Dorsolateral prefrontal cortex (tissue), 120 donors: ENCODE measurements at regions of chr1 and their contacts with region 1.

Region 1: DNA sequence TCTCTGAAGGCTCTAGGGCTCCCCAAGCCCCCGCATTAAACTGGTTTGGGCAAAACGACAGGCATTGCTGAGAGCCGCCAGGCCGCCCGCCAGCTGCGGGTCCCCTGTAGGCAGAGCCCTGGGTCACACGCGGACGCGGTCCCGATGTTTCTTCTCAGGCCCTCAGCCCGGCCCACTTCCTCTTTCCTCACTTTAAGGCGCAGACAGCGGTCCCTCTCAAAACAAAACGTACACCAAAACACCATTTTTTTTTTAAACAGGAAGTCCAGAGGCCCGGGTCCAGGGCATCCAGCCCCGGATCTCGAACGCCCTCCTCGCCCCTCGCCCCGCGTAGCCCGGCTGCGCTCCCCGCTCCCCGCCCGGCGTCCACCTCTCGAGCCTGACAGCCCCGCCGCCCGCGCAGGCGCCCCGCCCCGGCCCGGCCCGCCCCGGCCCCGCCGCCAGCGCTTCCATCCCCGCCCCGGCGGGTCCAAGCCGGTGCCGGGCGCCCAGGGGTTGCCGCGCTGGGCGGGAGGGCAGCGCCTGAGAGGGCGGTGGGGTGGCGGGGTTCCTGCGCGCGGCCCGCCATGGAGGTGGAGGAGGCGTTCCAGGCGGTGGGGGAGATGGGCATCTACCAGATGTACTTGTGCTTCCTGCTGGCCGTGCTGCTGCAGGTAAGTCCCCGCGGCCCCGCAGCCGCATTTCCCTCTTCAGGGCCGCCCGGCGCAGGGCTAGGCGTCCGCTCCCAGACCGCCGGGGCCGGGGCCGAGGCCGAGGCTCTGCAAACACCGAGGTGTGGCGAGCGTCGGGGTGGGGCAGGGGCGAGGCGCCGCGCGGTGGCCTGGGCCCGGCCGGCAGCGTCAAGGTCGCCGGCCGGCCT is at the start of gene SLC22A15:
- DNase-seq: peak; percentile 49 to 78 (median 56)
- H3K4me3 ChIP-seq: peak within 1 kb of the TSS; percentile 37 to 91 (median 79)
- H3K27ac ChIP-seq: peak within 1 kb of the TSS; percentile 87 to 99 (median 97)
- H3K27me3 ChIP-seq: no peaks in the 10 kb centered on the region
- CTCF ChIP-seq: peak in 7 of 56 donors; percentile 7 to 20 (median 10)
- total RNA-seq, gene SLC22A15: 18.9 to 85.6 (median 29.7) TPM

Region 2: GRCh38 chr1:115648717-115649691 is 327.3 kb before region 1 on chr1:
- intact Hi-C with region 1: no loop called
- DNase-seq: no peak
- H3K4me3 ChIP-seq: no peak overlapping the region
- H3K27ac ChIP-seq: no peak overlapping the region
- H3K27me3 ChIP-seq: peaks cover 0 to 16% (median 0%) of the 10 kb centered on the region in 45 donors
- CTCF ChIP-seq: no peak

Region 3: DNA sequence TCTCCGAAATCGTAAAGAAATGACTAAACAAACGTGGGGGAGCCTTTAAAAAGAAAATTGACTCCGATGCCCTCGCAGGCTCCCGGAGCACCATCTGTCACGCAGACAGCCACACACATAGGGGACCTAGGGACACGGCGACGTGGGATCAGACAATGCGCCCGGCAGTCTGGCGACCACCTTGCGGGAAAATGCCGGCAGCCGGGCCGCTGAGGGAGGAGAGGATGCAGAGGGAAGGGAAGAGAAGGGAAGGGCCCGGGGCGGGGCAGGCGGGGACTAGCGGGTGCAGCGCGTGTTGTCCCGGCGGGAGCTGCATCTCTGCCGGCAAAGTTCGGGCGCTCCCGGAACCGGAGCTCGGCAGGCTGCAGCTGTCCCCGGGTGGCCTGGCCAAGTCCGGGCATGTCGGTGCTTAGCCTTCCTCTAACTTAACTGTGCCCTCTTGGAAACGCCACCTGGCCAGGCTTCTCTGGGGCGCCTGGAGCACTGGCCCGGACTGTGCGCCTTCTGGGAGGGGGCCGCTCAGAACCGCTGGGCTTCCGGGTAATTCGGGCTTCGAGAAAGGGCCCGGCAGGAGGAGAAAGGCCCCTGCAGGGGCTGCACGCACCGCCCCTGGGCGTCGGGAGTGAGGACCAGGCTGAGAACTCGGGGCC is 137.1 kb before region 1 on chr1:
- intact Hi-C with region 1: loop called (anchors 1 to 2 kb)
- DNase-seq: peak in 7 of 10 donors; percentile 31 to 73 (median 50)
- H3K4me3 ChIP-seq: peak overlapping the region; percentile 14 to 81 (median 60)
- H3K27ac ChIP-seq: peak overlapping the region in 58 of 59 donors; percentile 34 to 94 (median 86)
- H3K27me3 ChIP-seq: peaks cover 0 to 85% (median 54%) of the 10 kb centered on the region in 45 donors
- CTCF ChIP-seq: peak in 1 of 56 donors; percentile 7

Region 4: DNA sequence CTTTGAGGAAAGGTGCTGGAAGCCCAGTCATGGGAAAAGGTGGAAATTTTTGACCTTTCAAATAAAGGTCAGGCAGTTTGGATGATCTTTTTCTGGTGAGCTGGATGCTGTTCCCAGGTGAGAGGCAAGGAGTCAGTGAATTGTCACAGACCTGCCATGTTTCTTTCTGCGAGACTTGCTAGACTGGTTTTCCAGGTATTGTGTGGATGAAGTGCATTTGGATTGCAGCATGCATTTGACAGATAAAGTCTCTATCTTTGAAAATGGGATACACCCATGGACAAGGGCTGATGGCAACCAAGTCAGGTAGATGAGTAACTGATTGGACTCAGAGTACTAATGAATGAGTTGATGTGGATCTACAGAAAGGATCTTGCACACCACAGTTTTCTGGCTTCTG is 69.6 kb before region 1 on chr1:
- intact Hi-C with region 1: loop called in 1 of 2 experiments (anchors 5 kb)
- DNase-seq: no peak
- H3K4me3 ChIP-seq: no peak overlapping the region
- H3K27ac ChIP-seq: no peak overlapping the region
- H3K27me3 ChIP-seq: peaks cover 0 to 4% (median 0%) of the 10 kb centered on the region in 45 donors
- CTCF ChIP-seq: no peak

Region 5: GRCh38 chr1:116020668-116021275 is 44.5 kb after region 1 on chr1:
- intact Hi-C with region 1: loop called in 1 of 2 experiments (anchors 5 kb)
- DNase-seq: peak in 9 of 10 donors; percentile 37 to 84 (median 60)
- H3K4me3 ChIP-seq: no peak overlapping the region
- H3K27ac ChIP-seq: peak overlapping the region in 31 of 59 donors; percentile 1 to 79 (median 44)
- H3K27me3 ChIP-seq: no peaks in the 10 kb centered on the region
- CTCF ChIP-seq: peak; percentile 26 to 85 (median 66)

Region 6: DNA sequence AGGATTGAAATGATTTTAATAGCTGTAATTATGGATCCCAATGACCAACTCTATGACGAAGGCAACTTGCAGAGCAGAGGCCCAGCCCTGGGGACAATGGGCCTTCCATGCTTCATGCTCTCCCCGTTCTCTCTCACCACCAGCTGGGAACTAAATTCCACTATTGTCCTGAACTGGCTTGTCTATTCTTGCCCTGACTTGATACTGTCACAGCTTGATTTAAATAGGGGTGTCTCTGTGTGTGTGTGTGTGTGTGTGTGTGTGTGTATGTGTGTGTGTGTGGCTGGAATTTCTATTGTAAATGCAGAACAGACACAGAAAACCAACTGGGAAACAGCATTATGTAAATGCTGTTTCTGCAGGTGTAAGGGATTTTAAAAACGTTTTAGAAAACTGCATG is 57.0 kb after region 1 on chr1:
- intact Hi-C with region 1: loop called in 1 of 2 experiments (anchors 5 kb)
- DNase-seq: peak in 9 of 10 donors; percentile 43 to 84 (median 70)
- H3K4me3 ChIP-seq: no peak overlapping the region
- H3K27ac ChIP-seq: peak overlapping the region; percentile 20 to 98 (median 92)
- H3K27me3 ChIP-seq: no peaks in the 10 kb centered on the region
- CTCF ChIP-seq: peak in 3 of 56 donors; percentile 14 to 19 (median 15)